ENCODE measurements at regions of chr10 and their contacts with region 1.

Region 1: GRCh38 chr10:68074775-68075549 is at the start of gene HERC4:
- DNase-seq: peak; percentile 80 to 91 (median 89)
- ATAC-seq: peak; percentile 97
- H3K4me3 ChIP-seq: peak within 1 kb of the TSS; percentile 91
- H3K4me3 Mint-ChIP-seq: peak within 1 kb of the TSS; percentile 91 to 98 (median 96)
- H3K27ac ChIP-seq: peak within 1 kb of the TSS; percentile 96
- H3K27ac Mint-ChIP-seq: peak within 1 kb of the TSS; percentile 89 to 95 (median 94)
- H3K4me1 ChIP-seq: peaks cover 15 to 21% of the 10 kb centered on the region in 2 donors
- H3K4me1 Mint-ChIP-seq: peaks cover 26 to 51% (median 41%) of the 10 kb centered on the region in 7 donors
- H3K27me3 ChIP-seq: peaks cover 0 to 3% of the 10 kb centered on the region in 2 donors
- H3K27me3 Mint-ChIP-seq: peaks cover 0 to 2% (median 0%) of the 10 kb centered on the region in 5 donors
- total RNA-seq, gene HERC4: 65.7 to 113 (median 78.6) TPM

Region 2: DNA sequence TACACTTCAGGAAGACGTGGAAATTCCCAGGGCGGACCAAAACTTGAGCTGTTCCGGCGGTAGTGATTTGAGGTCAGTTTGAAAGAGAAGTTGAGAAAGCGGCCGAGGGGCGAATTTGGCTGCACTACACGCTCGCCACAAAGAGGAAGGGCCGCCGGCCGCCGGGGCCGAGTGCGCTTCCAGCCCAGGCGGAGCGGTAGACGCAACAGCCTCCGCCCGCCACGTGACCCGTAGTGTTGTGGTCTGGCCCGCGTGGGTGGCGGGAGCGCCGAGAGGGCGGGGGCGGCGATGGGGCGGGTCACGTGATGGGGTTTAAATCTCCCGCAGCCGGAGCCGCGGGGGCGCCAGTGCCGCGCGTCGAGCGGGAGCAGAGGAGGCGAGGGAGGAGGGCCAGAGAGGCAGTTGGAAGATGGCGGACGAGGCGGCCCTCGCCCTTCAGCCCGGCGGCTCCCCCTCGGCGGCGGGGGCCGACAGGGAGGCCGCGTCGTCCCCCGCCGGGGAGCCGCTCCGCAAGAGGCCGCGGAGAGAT is 190.6 kb before region 1 on chr10 and contains the start of gene SIRT1:
- CTCF ChIA-PET with region 1: no interaction called
- POLR2A ChIA-PET with region 1: interaction called, 7 read pairs
- intact Hi-C with region 1: loop called (anchors 1 kb)
- DNase-seq: peak; percentile 87 to 95 (median 90)
- ATAC-seq: peak; percentile 89
- H3K4me3 ChIP-seq: peak within 1 kb of the TSS; percentile 75
- H3K4me3 Mint-ChIP-seq: peak within 1 kb of the TSS; percentile 86 to 98 (median 95)
- H3K27ac ChIP-seq: peak within 1 kb of the TSS; percentile 83
- H3K27ac Mint-ChIP-seq: peak within 1 kb of the TSS; percentile 90 to 98 (median 95)
- H3K4me1 ChIP-seq: peaks cover 12 to 16% of the 10 kb centered on the region in 2 donors
- H3K4me1 Mint-ChIP-seq: peaks cover 27 to 43% (median 35%) of the 10 kb centered on the region in 7 donors
- H3K27me3 ChIP-seq: no peaks in the 10 kb centered on the region
- H3K27me3 Mint-ChIP-seq: peaks cover 0 to 5% (median 0%) of the 10 kb centered on the region in 5 donors
- total RNA-seq, gene SIRT1: 25.9 to 66.8 (median 59.5) TPM

Region 3: GRCh38 chr10:68043030-68043429 is 31.9 kb before region 1 on chr10:
- CTCF ChIA-PET with region 1: interaction called, 3 read pairs
- POLR2A ChIA-PET with region 1: interaction called, 4 read pairs
- intact Hi-C with region 1: loop called (anchors 2 to 5 kb)
- DNase-seq: no peak
- ATAC-seq: no peak
- H3K4me3 ChIP-seq: no peak overlapping the region
- H3K4me3 Mint-ChIP-seq: no peak overlapping the region
- H3K27ac ChIP-seq: no peak overlapping the region
- H3K27ac Mint-ChIP-seq: no peak overlapping the region
- H3K4me1 ChIP-seq: no peaks in the 10 kb centered on the region
- H3K4me1 Mint-ChIP-seq: peaks cover under 1 to 29% (median 27%) of the 10 kb centered on the region in 7 donors
- H3K27me3 ChIP-seq: no peaks in the 10 kb centered on the region
- H3K27me3 Mint-ChIP-seq: no peaks in the 10 kb centered on the region

Region 4: DNA sequence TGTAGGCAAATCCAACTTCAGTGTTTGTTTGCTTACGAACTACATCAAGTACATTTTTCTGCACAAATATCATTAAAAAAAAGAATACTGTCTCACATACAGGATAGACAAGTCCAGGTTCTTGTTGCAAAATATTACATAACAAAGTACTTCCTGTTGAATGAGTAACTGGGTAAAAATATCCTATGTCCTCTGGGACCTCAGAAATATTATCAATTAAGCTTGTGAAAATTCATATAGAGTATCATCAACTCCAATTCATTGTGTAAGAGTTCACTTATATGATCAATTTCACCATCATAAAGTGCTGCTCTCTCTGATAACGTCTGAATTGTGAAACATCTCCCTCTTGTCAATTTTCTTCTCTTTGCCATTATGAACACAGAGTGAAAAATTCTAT is 22.5 kb before region 1 on chr10:
- CTCF ChIA-PET with region 1: no interaction called
- POLR2A ChIA-PET with region 1: interaction called, 4 read pairs
- intact Hi-C with region 1: loop called in 1 of 2 experiments (anchors 2 kb)
- DNase-seq: no peak
- ATAC-seq: no peak
- H3K4me3 ChIP-seq: no peak overlapping the region
- H3K4me3 Mint-ChIP-seq: peak overlapping the region in 2 of 10 donors; percentile 23 to 39
- H3K27ac ChIP-seq: no peak overlapping the region
- H3K27ac Mint-ChIP-seq: peak overlapping the region in 4 of 9 donors; percentile 48 to 83 (median 62)
- H3K4me1 ChIP-seq: peaks cover 0 to 6% of the 10 kb centered on the region in 2 donors
- H3K4me1 Mint-ChIP-seq: peaks cover 15 to 59% (median 55%) of the 10 kb centered on the region in 7 donors
- H3K27me3 ChIP-seq: no peaks in the 10 kb centered on the region
- H3K27me3 Mint-ChIP-seq: no peaks in the 10 kb centered on the region